Heart left ventricle (tissue), 16 donors: ENCODE measurements at regions of chr4 and their contacts with region 1.

Region 1: GRCh38 chr4:57734104-57734670 is 624.0 kb upstream of the IGFBP7 start:
- DNase-seq: peak in 2 of 5 donors; percentile 9 to 22
- ATAC-seq: peak; percentile 97 to 99 (median 98)
- H3K4me3 ChIP-seq: no peak overlapping the region
- H3K27ac ChIP-seq: no peak overlapping the region
- H3K4me1 ChIP-seq: peaks cover 0 to 6% (median 0%) of the 10 kb centered on the region in 12 donors
- H3K27me3 ChIP-seq: no peaks in the 10 kb centered on the region
- CTCF ChIP-seq: no peak
- POLR2A ChIP-seq: no peak

Region 2: GRCh38 chr4:57442831-57443291 is 291.3 kb before region 1 on chr4:
- intact Hi-C with region 1: loop called in 2 of 10 experiments (anchors 5 to 10 kb)
- DNase-seq: peak in 3 of 5 donors; percentile 22 to 43 (median 31)
- ATAC-seq: peak; percentile 62 to 82 (median 69)
- H3K4me3 ChIP-seq: no peak overlapping the region
- H3K27ac ChIP-seq: peak overlapping the region in 2 of 12 donors; percentile 1 to 30
- H3K4me1 ChIP-seq: peaks cover 0 to 16% (median 0%) of the 10 kb centered on the region in 12 donors
- H3K27me3 ChIP-seq: no peaks in the 10 kb centered on the region
- CTCF ChIP-seq: peak; percentile 55 to 80 (median 69)
- POLR2A ChIP-seq: no peak

Region 3: GRCh38 chr4:57499786-57500185 is 234.4 kb before region 1 on chr4:
- intact Hi-C with region 1: loop called in 1 of 10 experiments (anchors 10 kb)
- DNase-seq: no peak
- ATAC-seq: no peak
- H3K4me3 ChIP-seq: no peak overlapping the region
- H3K27ac ChIP-seq: no peak overlapping the region
- H3K4me1 ChIP-seq: peaks cover 0 to 13% (median 0%) of the 10 kb centered on the region in 12 donors
- H3K27me3 ChIP-seq: no peaks in the 10 kb centered on the region
- CTCF ChIP-seq: no peak
- POLR2A ChIP-seq: no peak

Region 4: GRCh38 chr4:57602141-57602540 is 132.0 kb before region 1 on chr4:
- intact Hi-C with region 1: no loop called
- DNase-seq: no peak
- ATAC-seq: no peak
- H3K4me3 ChIP-seq: no peak overlapping the region
- H3K27ac ChIP-seq: no peak overlapping the region
- H3K4me1 ChIP-seq: no peaks in the 10 kb centered on the region
- H3K27me3 ChIP-seq: no peaks in the 10 kb centered on the region
- CTCF ChIP-seq: no peak
- POLR2A ChIP-seq: no peak

Region 5: GRCh38 chr4:57614257-57614932 is 119.8 kb before region 1 on chr4:
- intact Hi-C with region 1: no loop called
- DNase-seq: no peak
- ATAC-seq: no peak
- H3K4me3 ChIP-seq: no peak overlapping the region
- H3K27ac ChIP-seq: no peak overlapping the region
- H3K4me1 ChIP-seq: no peaks in the 10 kb centered on the region
- H3K27me3 ChIP-seq: no peaks in the 10 kb centered on the region
- CTCF ChIP-seq: no peak
- POLR2A ChIP-seq: no peak

Region 6: DNA sequence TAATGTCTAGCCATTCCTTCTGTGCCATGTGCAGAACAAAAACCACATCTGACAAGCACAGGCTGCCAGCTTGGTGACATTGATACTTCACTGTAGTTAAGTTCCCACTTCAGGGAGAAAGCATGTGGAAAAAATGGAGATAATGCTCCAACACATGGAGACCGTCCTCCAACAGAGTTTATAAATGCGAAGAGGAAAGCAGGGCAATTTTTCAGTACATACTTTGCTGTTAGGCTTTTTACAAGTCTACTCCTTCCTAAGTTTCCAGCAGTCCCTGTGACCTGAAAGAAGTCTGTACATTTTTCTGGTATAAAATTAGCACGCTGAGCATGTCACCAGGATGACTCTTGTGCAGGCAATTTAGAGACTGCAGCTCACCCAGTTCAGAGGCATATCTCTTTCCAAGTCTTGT is 142.9 kb after region 1 on chr4:
- intact Hi-C with region 1: loop called in 1 of 10 experiments (anchors 10 kb)
- DNase-seq: peak in 3 of 5 donors; percentile 10 to 32 (median 20)
- ATAC-seq: peak; percentile 90 to 93 (median 92)
- H3K4me3 ChIP-seq: no peak overlapping the region
- H3K27ac ChIP-seq: peak overlapping the region in 11 of 12 donors; percentile 39 to 86 (median 65)
- H3K4me1 ChIP-seq: peaks cover 0 to 21% (median 0%) of the 10 kb centered on the region in 12 donors
- H3K27me3 ChIP-seq: no peaks in the 10 kb centered on the region
- CTCF ChIP-seq: no peak
- POLR2A ChIP-seq: no peak

Region 7: GRCh38 chr4:58061970-58062369 is 327.8 kb after region 1 on chr4:
- intact Hi-C with region 1: loop called in 1 of 10 experiments (anchors 10 kb)
- DNase-seq: no peak
- ATAC-seq: no peak
- H3K4me3 ChIP-seq: no peak overlapping the region
- H3K27ac ChIP-seq: no peak overlapping the region
- H3K4me1 ChIP-seq: no peaks in the 10 kb centered on the region
- H3K27me3 ChIP-seq: no peaks in the 10 kb centered on the region
- CTCF ChIP-seq: peak in 7 of 12 donors; percentile 6 to 39 (median 20)
- POLR2A ChIP-seq: no peak